HAP-1 (cell line): ENCODE measurements at regions of chr6 and their contacts with region 1.

Region 1: DNA sequence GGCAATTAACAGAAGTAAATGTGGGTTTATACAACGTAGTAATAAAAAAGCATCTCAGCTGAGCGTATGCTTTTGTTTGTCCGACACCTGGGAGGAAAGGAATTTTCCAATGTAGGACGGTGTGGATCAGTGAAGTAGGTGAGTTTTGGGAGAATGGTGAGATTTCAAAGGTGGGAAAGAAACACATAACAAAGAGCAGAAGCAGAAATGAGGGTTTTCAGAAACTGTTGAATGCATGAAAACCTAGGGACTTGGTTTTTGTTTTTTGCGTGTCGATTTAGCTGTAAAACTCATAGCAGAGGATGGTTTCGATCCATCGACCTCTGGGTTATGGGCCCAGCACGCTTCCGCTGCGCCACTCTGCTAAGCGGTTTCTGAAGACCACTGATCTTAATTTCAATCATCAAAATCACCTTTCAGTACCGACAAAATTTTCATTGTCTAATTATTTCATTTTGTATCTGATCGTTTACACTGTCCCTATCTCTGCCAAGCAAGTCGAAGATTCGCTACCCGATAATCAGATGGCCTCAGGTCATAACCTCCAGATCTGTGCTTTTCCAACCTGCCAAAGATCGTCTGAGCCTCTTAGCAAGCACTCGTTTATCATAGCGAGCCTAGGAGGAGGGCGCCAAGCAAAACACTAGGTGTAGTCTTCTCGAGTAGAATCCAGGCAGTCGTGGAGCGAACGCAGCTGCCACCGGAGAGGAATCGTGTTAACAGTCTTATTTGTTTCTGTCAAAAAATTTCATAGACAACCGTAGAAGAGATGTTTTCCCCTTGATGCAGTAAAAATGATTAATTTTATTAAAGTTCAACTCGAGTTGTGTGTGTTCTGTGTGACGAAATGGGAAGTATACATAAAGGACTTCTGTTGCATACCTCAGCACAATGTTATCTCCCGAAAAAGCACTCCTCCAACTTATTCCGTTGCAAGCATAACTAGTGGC is 20.9 kb upstream of the POM121L2 start:
- DNase-seq: peak; percentile 81 to 82
- H3K4me3 ChIP-seq: peak overlapping the region; percentile 57
- H3K4me1 ChIP-seq: peaks cover 4% of the 10 kb centered on the region
- H3K27me3 ChIP-seq: no peaks in the 10 kb centered on the region

Region 2: DNA sequence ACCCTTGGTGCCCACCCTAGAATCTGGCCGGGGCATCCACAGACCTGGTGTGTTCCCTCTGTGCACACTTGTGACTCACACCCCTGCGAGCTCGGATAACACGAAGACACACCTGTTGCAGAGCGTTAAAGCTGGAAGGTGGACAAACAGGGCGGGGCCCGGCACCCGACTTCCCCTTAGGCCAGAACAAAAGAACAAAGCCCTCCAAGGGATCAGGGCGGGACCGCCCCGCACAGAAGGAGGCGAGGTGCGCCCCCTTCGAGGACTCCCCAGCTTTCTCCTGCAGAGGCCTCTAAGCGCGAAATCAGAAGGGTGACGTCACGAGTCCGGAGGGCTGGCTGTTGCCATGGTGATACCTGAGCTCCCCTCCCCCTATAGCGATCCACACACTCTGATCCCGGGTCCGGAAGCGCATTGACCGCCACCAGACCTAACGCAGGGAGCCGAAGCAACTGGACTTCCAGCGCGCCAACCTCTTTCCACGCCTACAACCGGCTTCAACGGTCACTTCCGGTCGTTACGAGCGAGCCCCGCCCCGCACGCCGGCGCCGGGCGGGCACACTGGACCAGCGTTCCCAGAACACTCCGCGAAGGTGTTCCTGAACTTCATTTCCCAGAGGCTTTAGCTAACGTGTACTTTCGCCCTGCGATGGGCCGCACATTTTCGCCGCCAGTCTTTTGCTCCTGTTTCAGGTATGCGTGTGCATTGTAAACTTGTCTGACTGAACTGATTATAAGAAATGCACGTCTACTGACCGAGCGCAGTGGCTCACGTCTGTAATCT is 139.8 kb after region 1 on chr6 and contains the start of gene ZNF184:
- in situ Hi-C with region 1: loop called (anchors 10 kb)
- DNase-seq: peak; percentile 93 to 96
- H3K4me3 ChIP-seq: peak within 1 kb of the TSS; percentile 66
- H3K4me1 ChIP-seq: peaks cover 5% of the 10 kb centered on the region
- H3K27me3 ChIP-seq: no peaks in the 10 kb centered on the region